GM12878 (cell line): ENCODE measurements at regions of chr19 and their contacts with region 1.

Region 1: DNA sequence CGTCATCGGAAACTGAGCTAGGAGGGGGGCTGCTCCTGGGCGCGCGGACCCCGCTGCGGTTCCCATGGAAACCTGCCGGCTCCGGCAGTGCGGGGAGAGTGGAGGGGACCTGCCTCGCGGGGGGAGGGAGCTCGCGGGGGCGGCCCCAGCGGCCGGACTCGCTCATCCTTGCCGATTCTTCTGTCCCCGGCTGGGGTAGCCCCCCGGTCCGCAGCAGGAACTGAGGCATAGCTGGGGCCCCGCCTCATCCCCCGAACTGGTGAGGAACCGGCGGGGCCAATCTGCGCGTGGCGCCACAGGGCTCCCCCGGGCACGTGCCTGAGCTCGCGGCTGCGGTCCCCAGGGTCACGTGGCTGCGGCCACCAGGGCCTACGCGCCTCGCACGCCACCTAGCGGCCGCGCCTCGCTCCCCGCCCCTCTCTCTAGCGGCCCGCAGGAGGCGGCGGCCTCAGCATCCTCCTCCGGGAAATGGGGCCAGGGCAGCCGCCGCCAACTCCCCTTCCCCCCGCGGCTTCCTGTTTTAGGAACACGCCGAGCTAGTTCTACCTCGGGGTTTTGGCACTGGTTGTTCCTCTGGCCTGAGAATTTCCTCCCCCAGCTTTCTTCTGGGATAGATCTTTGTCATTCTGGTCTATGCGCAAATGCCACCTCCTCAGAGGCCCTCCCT is 1.7 kb upstream of the ELAVL3 start:
- DNase-seq: peak; percentile 50
- ATAC-seq: peak; percentile 95
- H3K4me3 ChIP-seq: peak overlapping the region; percentile 40; the same call in 1 of the 2 replicates
- H3K27ac ChIP-seq: no peak overlapping the region
- H3K4me1 ChIP-seq: peaks cover 19% of the 10 kb centered on the region
- H3K27me3 ChIP-seq: peaks cover 8 to 10% of the 10 kb centered on the region in 2 experiments
- CTCF ChIP-seq: peak; percentile 83 to 99 (median 93); a peak in 5 of 6 replicates
- EP300 ChIP-seq: peak; percentile 7 to 35; a peak in 1 of 4 replicates
- POLR2A ChIP-seq: no peak; the same call in 1 of the 2 replicates
- RAD21 ChIP-seq: peak; percentile 69

Region 2: DNA sequence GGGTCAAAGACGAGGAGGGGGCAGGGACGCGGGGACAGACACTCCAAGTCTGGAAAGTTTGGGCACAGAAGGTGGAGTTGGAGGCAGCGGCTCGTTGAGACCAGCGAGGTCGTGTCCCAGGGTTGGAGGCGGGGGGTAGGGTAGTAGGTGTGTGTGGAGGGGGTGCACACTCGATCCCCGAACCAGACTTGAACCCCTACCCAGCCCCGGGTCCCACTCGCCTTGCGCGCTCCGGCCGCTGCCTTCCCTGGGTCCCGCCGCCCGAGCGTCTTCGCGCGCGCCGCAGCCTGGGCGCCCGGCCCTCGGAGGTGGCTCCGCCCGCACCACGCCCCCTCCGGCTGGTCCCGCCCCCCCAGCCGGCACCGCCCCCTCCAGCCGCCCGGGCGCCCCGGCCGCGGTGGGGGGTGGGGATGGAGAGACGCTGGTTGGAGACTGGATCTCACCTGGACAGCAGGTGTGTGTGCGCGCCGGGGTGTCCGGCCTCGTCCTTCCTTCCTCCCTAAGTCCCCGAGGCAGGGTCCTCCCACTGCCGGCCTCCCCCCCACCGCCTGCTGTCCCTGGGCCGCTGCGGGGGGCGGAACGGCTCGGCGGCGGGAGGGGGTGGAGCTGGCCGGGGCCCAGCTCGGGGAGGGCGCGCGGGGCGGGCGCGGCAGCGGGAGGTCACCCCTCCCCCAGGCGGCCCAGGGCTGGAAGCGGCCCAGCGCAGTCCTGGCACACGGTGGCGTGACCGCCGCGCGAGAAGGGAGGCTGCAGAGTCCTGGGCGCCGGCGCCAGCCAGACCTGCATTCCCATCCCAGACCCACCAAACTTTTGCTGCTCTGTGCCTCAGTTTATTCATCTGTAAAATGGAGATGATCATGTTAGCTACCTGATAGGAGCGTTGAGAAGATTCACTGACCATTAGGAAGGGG is 285.0 kb before region 1 on chr19 and contains the start of gene KANK2:
- CTCF ChIA-PET with region 1: no interaction called
- POLR2A ChIA-PET with region 1: no interaction called
- RAD21 ChIA-PET with region 1: no interaction called
- SMC1A ChIA-PET with region 1: no interaction called
- in situ Hi-C with region 1: no loop called
- intact Hi-C with region 1: no loop called
- DNase-seq: peak; percentile 13
- ATAC-seq: peak; percentile 93
- H3K4me3 ChIP-seq: peak within 1 kb of the TSS; percentile 97
- H3K27ac ChIP-seq: peak within 1 kb of the TSS; percentile 42
- H3K4me1 ChIP-seq: peaks cover 11% of the 10 kb centered on the region
- H3K27me3 ChIP-seq: no peaks in the 10 kb centered on the region
- CTCF ChIP-seq: peak in 2 of 3 experiments; percentile 2 to 29; a peak in 2 of 6 replicates
- EP300 ChIP-seq: no peak
- POLR2A ChIP-seq: peak; percentile 76
- RAD21 ChIP-seq: no peak
- polyA plus RNA-seq, gene KANK2: 4.9 to 7.3 TPM

Region 3: DNA sequence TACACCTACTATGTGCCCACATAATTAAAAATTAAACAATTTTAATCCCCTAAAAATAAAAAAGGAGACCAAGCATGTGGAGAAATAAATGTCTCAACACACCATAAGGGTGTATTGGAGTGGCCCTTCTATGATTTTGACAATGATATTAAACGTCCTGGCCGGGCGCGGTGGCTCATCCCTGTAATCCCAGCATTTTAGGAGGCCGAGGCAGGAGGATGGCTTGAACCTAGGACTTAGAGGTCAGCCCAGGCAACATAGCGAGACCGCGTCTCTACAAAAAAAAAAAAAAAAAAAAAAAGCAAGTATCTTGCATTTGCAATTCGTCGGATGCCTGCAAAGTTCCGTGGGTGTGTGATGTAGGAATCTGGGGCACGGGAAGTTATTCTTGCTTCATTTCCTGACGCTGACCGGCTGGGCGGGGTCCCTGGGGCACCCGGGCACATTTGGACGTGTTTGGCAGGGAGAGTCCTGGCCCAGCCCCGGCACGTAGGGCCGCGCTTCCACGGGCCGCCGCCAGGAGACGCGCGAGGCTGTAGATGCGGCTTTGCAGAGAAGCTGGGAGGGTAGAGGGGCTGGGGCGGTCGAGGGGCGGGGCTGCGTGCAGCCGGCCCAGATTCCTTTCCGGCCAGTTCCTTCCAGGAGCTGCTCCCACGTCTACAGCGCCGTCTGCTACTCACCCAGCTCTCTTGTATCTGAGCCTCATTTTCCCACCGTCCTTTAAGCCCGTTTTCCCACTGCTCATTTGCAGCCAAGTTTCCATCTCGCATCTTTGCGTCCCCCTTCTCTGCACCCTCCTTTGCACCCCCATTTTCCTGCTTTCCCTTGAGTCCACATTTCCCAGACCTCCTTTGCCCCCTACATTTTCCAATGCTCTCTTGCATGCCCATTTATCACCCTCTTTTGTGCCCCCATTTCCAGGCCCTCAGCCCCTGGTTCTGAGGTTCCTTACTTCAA is 188.8 kb before region 1 on chr19:
- CTCF ChIA-PET with region 1: interaction called, 13 read pairs
- POLR2A ChIA-PET with region 1: no interaction called
- RAD21 ChIA-PET with region 1: interaction called, 9 read pairs
- SMC1A ChIA-PET with region 1: interaction called, 6 read pairs
- in situ Hi-C with region 1: loop called (anchors 10 kb)
- intact Hi-C with region 1: loop called (anchors 2 kb)
- DNase-seq: peak; percentile 59
- ATAC-seq: peak; percentile 99
- H3K4me3 ChIP-seq: peak overlapping the region; percentile 32; the same call in 1 of the 2 replicates
- H3K27ac ChIP-seq: no peak overlapping the region
- H3K4me1 ChIP-seq: peaks cover 7% of the 10 kb centered on the region
- H3K27me3 ChIP-seq: no peaks in the 10 kb centered on the region
- CTCF ChIP-seq: peak; percentile 91 to 100 (median 96)
- EP300 ChIP-seq: no peak
- POLR2A ChIP-seq: no peak
- RAD21 ChIP-seq: peak; percentile 96

Region 4: GRCh38 chr19:11422163-11423021 is 60.1 kb before region 1 on chr19:
- CTCF ChIA-PET with region 1: interaction called, 10 read pairs
- POLR2A ChIA-PET with region 1: interaction called, 3 read pairs
- RAD21 ChIA-PET with region 1: interaction called, 7 read pairs
- SMC1A ChIA-PET with region 1: interaction called, 3 read pairs
- in situ Hi-C with region 1: no loop called
- intact Hi-C with region 1: no loop called
- DNase-seq: peak; percentile 64
- ATAC-seq: peak; percentile 95
- H3K4me3 ChIP-seq: peak overlapping the region; percentile 39; the same call in 1 of the 2 replicates
- H3K27ac ChIP-seq: no peak overlapping the region
- H3K4me1 ChIP-seq: peaks cover 22% of the 10 kb centered on the region
- H3K27me3 ChIP-seq: peaks cover 7 to 16% of the 10 kb centered on the region in 2 experiments
- CTCF ChIP-seq: no peak
- EP300 ChIP-seq: 0 out of 4 replicates have a peak, but pooled peaks of 1 of the 2 experiments have one; percentile 7
- POLR2A ChIP-seq: peak; percentile 33; the same call in 1 of the 2 replicates
- RAD21 ChIP-seq: no peak

Region 5: GRCh38 chr19:11446652-11447301 is 35.7 kb before region 1 on chr19:
- CTCF ChIA-PET with region 1: interaction called, 14 read pairs
- POLR2A ChIA-PET with region 1: interaction called, 9 read pairs
- RAD21 ChIA-PET with region 1: interaction called, 9 read pairs
- SMC1A ChIA-PET with region 1: interaction called, 7 read pairs
- in situ Hi-C with region 1: no loop called
- intact Hi-C with region 1: no loop called
- DNase-seq: no peak
- ATAC-seq: peak; percentile 85
- H3K4me3 ChIP-seq: no peak overlapping the region
- H3K27ac ChIP-seq: no peak overlapping the region
- H3K4me1 ChIP-seq: 0 out of 2 replicates have a peak, but pooled peaks cover 4% of the 10 kb centered on the region
- H3K27me3 ChIP-seq: no peaks in the 10 kb centered on the region
- CTCF ChIP-seq: peak; percentile 53 to 82 (median 68)
- EP300 ChIP-seq: no peak
- POLR2A ChIP-seq: no peak
- RAD21 ChIP-seq: peak; percentile 70

Region 6: GRCh38 chr19:11463391-11463790 is 19.1 kb before region 1 on chr19:
- CTCF ChIA-PET with region 1: interaction called, 11 read pairs
- POLR2A ChIA-PET with region 1: no interaction called
- RAD21 ChIA-PET with region 1: interaction called, 3 read pairs
- SMC1A ChIA-PET with region 1: no interaction called
- in situ Hi-C with region 1: no loop called
- intact Hi-C with region 1: no loop called
- DNase-seq: no peak
- ATAC-seq: 0 out of 3 replicates have a peak, but pooled peaks have one; percentile 14
- H3K4me3 ChIP-seq: no peak overlapping the region
- H3K27ac ChIP-seq: no peak overlapping the region
- H3K4me1 ChIP-seq: no peaks in the 10 kb centered on the region; the same call in 1 of the 2 replicates
- H3K27me3 ChIP-seq: no peaks in the 10 kb centered on the region
- CTCF ChIP-seq: no peak
- EP300 ChIP-seq: no peak
- POLR2A ChIP-seq: no peak
- RAD21 ChIP-seq: no peak

Region 7: GRCh38 chr19:11821474-11822109 is 339.1 kb after region 1 on chr19:
- CTCF ChIA-PET with region 1: no interaction called
- POLR2A ChIA-PET with region 1: no interaction called
- RAD21 ChIA-PET with region 1: no interaction called
- SMC1A ChIA-PET with region 1: no interaction called
- in situ Hi-C with region 1: no loop called
- intact Hi-C with region 1: no loop called
- DNase-seq: no peak
- ATAC-seq: no peak
- H3K4me3 ChIP-seq: no peak overlapping the region
- H3K27ac ChIP-seq: no peak overlapping the region
- H3K4me1 ChIP-seq: no peaks in the 10 kb centered on the region
- H3K27me3 ChIP-seq: no peaks in the 10 kb centered on the region
- CTCF ChIP-seq: no peak
- EP300 ChIP-seq: no peak
- POLR2A ChIP-seq: no peak
- RAD21 ChIP-seq: no peak